OCI-LY7 (cell line): ENCODE measurements at regions of chr7 and their contacts with region 1.

Region 1: DNA sequence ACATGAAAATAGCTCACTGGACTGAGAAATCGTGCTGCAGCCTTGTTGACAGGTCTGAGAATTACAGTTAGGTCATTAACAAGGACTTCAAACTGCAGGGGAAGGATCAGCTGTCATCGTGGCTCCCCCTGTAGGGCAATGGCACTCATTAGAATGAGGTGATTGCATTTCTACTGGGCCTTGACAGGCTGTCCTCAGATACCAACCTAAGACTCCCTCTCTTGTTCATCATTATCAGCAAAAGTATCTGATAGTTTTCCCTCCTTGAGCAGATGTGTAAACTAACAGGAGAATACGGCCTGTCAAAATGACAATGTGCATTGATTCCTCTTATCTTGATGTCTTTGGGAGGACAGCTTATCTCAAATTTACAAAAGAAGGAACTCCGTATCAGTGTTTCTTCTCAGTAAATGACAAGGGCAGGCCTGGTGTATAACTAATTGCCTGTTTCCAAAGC is 648.5 kb upstream of the LRRN3 start:
- DNase-seq: peak; percentile 18
- H3K4me3 ChIP-seq: no peak overlapping the region
- H3K27ac ChIP-seq: no peak overlapping the region
- H3K4me1 ChIP-seq: no peaks in the 10 kb centered on the region
- CTCF ChIP-seq: peak; percentile 63

Region 2: GRCh38 chr7:110090110-110090769 is 352.2 kb before region 1 on chr7:
- CTCF ChIA-PET with region 1: no interaction called
- POLR2A ChIA-PET with region 1: no interaction called
- intact Hi-C with region 1: loop called (anchors 5 kb)
- DNase-seq: peak; percentile 1
- H3K4me3 ChIP-seq: no peak overlapping the region
- H3K27ac ChIP-seq: no peak overlapping the region
- H3K4me1 ChIP-seq: no peaks in the 10 kb centered on the region
- CTCF ChIP-seq: peak; percentile 54; the same call in 1 of the 2 replicates